Dendritic cell treated with granulocyte-macrophage colony-stimulating factor and Interleukin-4, amounts not matched to agents 40 ng/mL and 50 ng/mL, for 4 days (primary cell): ENCODE measurements at regions of chr3 and their contacts with region 1.

Region 1: DNA sequence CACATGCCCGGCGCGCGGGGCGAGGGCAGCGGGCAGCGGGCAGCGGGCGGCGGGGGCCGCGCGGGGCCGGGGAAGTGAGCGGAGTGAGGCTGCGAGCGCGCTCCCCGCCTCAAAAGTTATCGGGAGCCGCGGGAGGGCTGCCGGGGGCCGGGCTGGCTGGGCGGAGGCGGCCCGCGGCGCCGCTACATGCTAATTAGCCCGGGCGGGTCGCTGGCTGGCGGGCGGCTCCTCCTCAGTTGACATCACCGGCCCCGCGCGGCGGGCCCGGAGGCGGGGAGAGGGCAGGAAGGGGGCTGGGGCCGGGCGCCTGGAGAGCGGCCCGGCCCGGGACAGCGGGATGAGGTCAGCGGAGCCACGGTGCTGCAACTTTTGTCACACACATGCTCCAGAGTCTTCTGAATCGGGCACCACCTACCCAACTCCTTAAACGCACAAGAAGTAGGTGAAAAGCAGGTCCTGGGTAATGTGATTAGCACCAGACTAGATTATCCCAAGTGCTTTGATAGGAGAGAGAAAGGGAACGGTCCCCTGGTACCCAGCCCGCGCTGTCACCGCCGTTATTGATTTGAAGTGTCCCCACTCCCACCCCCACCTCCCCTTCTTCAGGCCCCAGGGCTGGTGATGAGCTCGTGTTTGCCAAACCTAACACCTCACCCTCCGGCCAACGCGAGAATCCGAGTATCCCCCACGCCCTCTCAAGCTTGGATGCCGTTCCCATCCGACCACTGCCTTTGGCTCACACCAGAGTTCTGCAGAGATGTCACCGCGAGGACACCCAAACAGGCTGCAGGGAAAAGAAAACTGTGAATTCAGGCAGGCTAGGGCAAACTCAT is at the start of gene HEG1:
- H3K4me3 Mint-ChIP-seq: peak within 1 kb of the TSS; percentile 82
- H3K27ac Mint-ChIP-seq: peak within 1 kb of the TSS; percentile 68
- H3K4me1 Mint-ChIP-seq: peaks cover 43% of the 10 kb centered on the region
- H3K27me3 Mint-ChIP-seq: peaks cover 51% of the 10 kb centered on the region

Region 2: GRCh38 chr3:123807820-123808219 is 1248.3 kb before region 1 on chr3:
- intact Hi-C with region 1: no loop called
- H3K4me3 Mint-ChIP-seq: no peak overlapping the region
- H3K27ac Mint-ChIP-seq: no peak overlapping the region
- H3K4me1 Mint-ChIP-seq: no peaks in the 10 kb centered on the region
- H3K27me3 Mint-ChIP-seq: no peaks in the 10 kb centered on the region

Region 3: GRCh38 chr3:125148836-125149235 is 92.7 kb after region 1 on chr3:
- intact Hi-C with region 1: loop called (anchors 5 kb)
- H3K4me3 Mint-ChIP-seq: peak overlapping the region; percentile 4
- H3K27ac Mint-ChIP-seq: peak overlapping the region; percentile 97
- H3K4me1 Mint-ChIP-seq: peaks cover 70% of the 10 kb centered on the region
- H3K27me3 Mint-ChIP-seq: no peaks in the 10 kb centered on the region